ENCODE measurements at regions of chr20 and their contacts with region 1.

Region 1: GRCh38 chr20:11544029-11544678 is 373.5 kb upstream of the BTBD3 start:
- DNase-seq: peak; percentile 14
- H3K4me3 ChIP-seq: no peak overlapping the region
- H3K27ac ChIP-seq: no peak overlapping the region
- H3K4me1 ChIP-seq: no peaks in the 10 kb centered on the region
- H3K27me3 ChIP-seq: no peaks in the 10 kb centered on the region
- CTCF ChIP-seq: peak; percentile 52 to 80 (median 62)
- EP300 ChIP-seq: no peak
- POLR2A ChIP-seq: no peak

Region 2: GRCh38 chr20:9978397-9979004 is 1565.7 kb before region 1 on chr20:
- in situ Hi-C with region 1: no loop called
- intact Hi-C with region 1: loop called (anchors 10 kb)
- DNase-seq: peak; percentile 15
- H3K4me3 ChIP-seq: no peak overlapping the region
- H3K27ac ChIP-seq: no peak overlapping the region
- H3K4me1 ChIP-seq: peaks cover 0 to 6% (median 3%) of the 10 kb centered on the region in 4 donors
- H3K27me3 ChIP-seq: no peaks in the 10 kb centered on the region
- CTCF ChIP-seq: peak; percentile 67 to 77 (median 67)
- EP300 ChIP-seq: no peak
- POLR2A ChIP-seq: no peak

Region 3: GRCh38 chr20:10412591-10413408 is 1131.4 kb before region 1 on chr20:
- in situ Hi-C with region 1: loop called in 1 of 4 experiments (anchors 25 kb)
- intact Hi-C with region 1: no loop called
- DNase-seq: no peak
- H3K4me3 ChIP-seq: no peak overlapping the region
- H3K27ac ChIP-seq: no peak overlapping the region
- H3K4me1 ChIP-seq: peaks cover 0 to 7% (median 2%) of the 10 kb centered on the region in 4 donors
- H3K27me3 ChIP-seq: no peaks in the 10 kb centered on the region
- CTCF ChIP-seq: no peak
- EP300 ChIP-seq: no peak
- POLR2A ChIP-seq: no peak

Region 4: GRCh38 chr20:10469599-10469998 is 1074.6 kb before region 1 on chr20:
- in situ Hi-C with region 1: loop called in 2 of 4 experiments (anchors 25 kb)
- intact Hi-C with region 1: loop called (anchors 10 kb)
- DNase-seq: peak; percentile 60
- H3K4me3 ChIP-seq: no peak overlapping the region
- H3K27ac ChIP-seq: peak overlapping the region in 3 of 4 donors; percentile 30 to 41 (median 37)
- H3K4me1 ChIP-seq: peaks cover 6 to 46% (median 13%) of the 10 kb centered on the region in 4 donors
- H3K27me3 ChIP-seq: no peaks in the 10 kb centered on the region
- CTCF ChIP-seq: peak; percentile 56 to 66 (median 60)
- EP300 ChIP-seq: no peak
- POLR2A ChIP-seq: no peak

Region 5: GRCh38 chr20:10553326-10553984 is 990.7 kb before region 1 on chr20:
- in situ Hi-C with region 1: loop called in 2 of 4 experiments (anchors 10 kb)
- intact Hi-C with region 1: no loop called
- DNase-seq: peak; percentile 74
- H3K4me3 ChIP-seq: no peak overlapping the region
- H3K27ac ChIP-seq: no peak overlapping the region
- H3K4me1 ChIP-seq: peaks cover 0 to 21% (median 5%) of the 10 kb centered on the region in 4 donors
- H3K27me3 ChIP-seq: no peaks in the 10 kb centered on the region
- CTCF ChIP-seq: peak; percentile 67 to 81 (median 73)
- EP300 ChIP-seq: no peak
- POLR2A ChIP-seq: no peak

Region 6: GRCh38 chr20:11296951-11297350 is 247.2 kb before region 1 on chr20:
- in situ Hi-C with region 1: loop called in 1 of 4 experiments (anchors 25 kb)
- intact Hi-C with region 1: no loop called
- DNase-seq: no peak
- H3K4me3 ChIP-seq: no peak overlapping the region
- H3K27ac ChIP-seq: no peak overlapping the region
- H3K4me1 ChIP-seq: no peaks in the 10 kb centered on the region
- H3K27me3 ChIP-seq: no peaks in the 10 kb centered on the region
- CTCF ChIP-seq: no peak
- EP300 ChIP-seq: no peak
- POLR2A ChIP-seq: no peak

Region 7: GRCh38 chr20:11473983-11474382 is 70.2 kb before region 1 on chr20:
- in situ Hi-C with region 1: no loop called
- intact Hi-C with region 1: no loop called
- DNase-seq: no peak
- H3K4me3 ChIP-seq: no peak overlapping the region
- H3K27ac ChIP-seq: no peak overlapping the region
- H3K4me1 ChIP-seq: no peaks in the 10 kb centered on the region
- H3K27me3 ChIP-seq: no peaks in the 10 kb centered on the region
- CTCF ChIP-seq: no peak
- EP300 ChIP-seq: no peak
- POLR2A ChIP-seq: no peak

Region 8: GRCh38 chr20:11496380-11496779 is 47.8 kb before region 1 on chr20:
- in situ Hi-C with region 1: no loop called
- intact Hi-C with region 1: no loop called
- DNase-seq: no peak
- H3K4me3 ChIP-seq: no peak overlapping the region
- H3K27ac ChIP-seq: no peak overlapping the region
- H3K4me1 ChIP-seq: no peaks in the 10 kb centered on the region
- H3K27me3 ChIP-seq: no peaks in the 10 kb centered on the region
- CTCF ChIP-seq: no peak
- EP300 ChIP-seq: no peak
- POLR2A ChIP-seq: no peak

Measured in transverse colon (tissue), 4 donors.